T-cell (primary cell): ENCODE measurements at regions of chr2 and their contacts with region 1.

Region 1: GRCh38 chr2:207143215-207144172 is 22.3 kb downstream of the KLF7 start:
- DNase-seq: peak; percentile 36 to 80 (median 61)
- ATAC-seq: peak; percentile 78 to 88 (median 84)
- H3K4me3 ChIP-seq: peak overlapping the region; percentile 32 to 61
- H3K4me3 Mint-ChIP-seq: peak overlapping the region; percentile 68 to 69 (median 68)
- H3K27ac ChIP-seq: peak overlapping the region; percentile 86
- H3K27ac Mint-ChIP-seq: peak overlapping the region; percentile 92 to 97
- H3K4me1 ChIP-seq: peaks cover 34 to 35% of the 10 kb centered on the region in 2 experiments
- H3K4me1 Mint-ChIP-seq: peaks cover 71 to 83% (median 81%) of the 10 kb centered on the region in 3 donors
- H3K27me3 ChIP-seq: no peaks in the 10 kb centered on the region
- H3K27me3 Mint-ChIP-seq: no peaks in the 10 kb centered on the region

Region 2: GRCh38 chr2:207156451-207157161 is 13.1 kb after region 1 on chr2:
- CTCF ChIA-PET with region 1: interaction called, 4 to 5 read pairs
- POLR2A ChIA-PET with region 1: interaction called, 4 to 13 read pairs
- DNase-seq: no peak
- ATAC-seq: peak in 3 of 4 experiments; percentile 17 to 34 (median 20)
- H3K4me3 ChIP-seq: no peak overlapping the region
- H3K4me3 Mint-ChIP-seq: peak overlapping the region in 2 of 3 donors; percentile 51 to 55
- H3K27ac ChIP-seq: no peak overlapping the region
- H3K27ac Mint-ChIP-seq: peak overlapping the region; percentile 80 to 89
- H3K4me1 ChIP-seq: peaks cover 32 to 48% of the 10 kb centered on the region in 2 experiments
- H3K4me1 Mint-ChIP-seq: peaks cover 91 to 97% (median 94%) of the 10 kb centered on the region in 3 donors
- H3K27me3 ChIP-seq: no peaks in the 10 kb centered on the region
- H3K27me3 Mint-ChIP-seq: no peaks in the 10 kb centered on the region